ENCODE measurements at regions of chr1 and their contacts with region 1.

Region 1: GRCh38 chr1:178542560-178543356 is 29.8 kb downstream of the TEX35 start:
- DNase-seq: peak; percentile 93
- ATAC-seq: peak; percentile 80
- H3K4me3 ChIP-seq: peak overlapping the region; percentile 84 to 90 (median 88)
- H3K4me3 Mint-ChIP-seq: peak overlapping the region; percentile 99
- H3K27ac ChIP-seq: peak overlapping the region; percentile 55 to 61
- H3K27ac Mint-ChIP-seq: peak overlapping the region; percentile 98
- H3K4me1 ChIP-seq: peaks cover 36 to 46% of the 10 kb centered on the region in 2 donors
- H3K4me1 Mint-ChIP-seq: peaks cover 50% of the 10 kb centered on the region
- H3K27me3 ChIP-seq: no peaks in the 10 kb centered on the region
- H3K27me3 Mint-ChIP-seq: no peaks in the 10 kb centered on the region
- CTCF ChIP-seq: peak; percentile 99

Region 2: GRCh38 chr1:177659281-177659680 is 883.5 kb before region 1 on chr1:
- CTCF ChIA-PET with region 1: no interaction called
- POLR2A ChIA-PET with region 1: no interaction called
- intact Hi-C with region 1: no loop called
- DNase-seq: no peak
- ATAC-seq: no peak
- H3K4me3 ChIP-seq: no peak overlapping the region
- H3K4me3 Mint-ChIP-seq: no peak overlapping the region
- H3K27ac ChIP-seq: no peak overlapping the region
- H3K27ac Mint-ChIP-seq: no peak overlapping the region
- H3K4me1 ChIP-seq: no peaks in the 10 kb centered on the region
- H3K4me1 Mint-ChIP-seq: no peaks in the 10 kb centered on the region
- H3K27me3 ChIP-seq: no peaks in the 10 kb centered on the region
- H3K27me3 Mint-ChIP-seq: no peaks in the 10 kb centered on the region
- CTCF ChIP-seq: no peak

Region 3: DNA sequence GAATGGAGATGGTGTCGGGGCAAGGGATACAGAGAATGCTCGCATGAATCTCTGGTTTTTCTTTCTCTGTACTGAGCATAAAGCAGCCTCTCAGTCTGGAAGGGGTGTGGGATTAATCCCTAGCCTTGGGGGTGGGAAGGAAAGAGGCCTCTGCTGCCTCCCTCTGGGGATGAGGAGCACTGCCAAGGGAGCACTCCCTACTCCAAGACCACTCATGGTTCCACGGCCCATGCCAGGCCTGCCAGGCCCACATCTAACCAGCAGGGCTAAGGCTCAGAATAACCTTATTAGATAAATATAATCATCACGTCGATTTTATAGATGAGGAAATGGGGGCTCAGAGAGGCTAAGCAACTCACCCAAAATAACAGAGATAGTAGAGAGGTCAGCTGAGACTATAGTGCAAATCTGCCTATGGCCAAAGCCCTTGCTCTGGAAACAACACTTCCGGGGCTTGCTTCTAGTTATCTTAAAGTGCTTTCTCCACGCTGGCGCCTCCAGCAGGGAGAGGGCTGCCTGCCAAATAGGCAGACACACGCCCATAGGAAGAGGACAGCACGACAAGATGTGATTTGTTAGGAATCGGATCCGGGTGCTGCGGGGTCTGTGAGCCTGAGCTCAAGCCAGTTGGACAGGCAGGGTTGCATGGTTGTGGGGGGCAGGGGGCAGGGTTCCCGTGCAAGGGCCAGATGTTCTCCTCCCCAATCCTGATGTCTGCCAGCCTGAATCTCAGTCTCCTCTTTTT is 29.3 kb before region 1 on chr1:
- CTCF ChIA-PET with region 1: no interaction called
- POLR2A ChIA-PET with region 1: no interaction called
- intact Hi-C with region 1: no loop called
- DNase-seq: no peak
- ATAC-seq: no peak
- H3K4me3 ChIP-seq: no peak overlapping the region
- H3K4me3 Mint-ChIP-seq: no peak overlapping the region
- H3K27ac ChIP-seq: no peak overlapping the region
- H3K27ac Mint-ChIP-seq: no peak overlapping the region
- H3K4me1 ChIP-seq: no peaks in the 10 kb centered on the region
- H3K4me1 Mint-ChIP-seq: no peaks in the 10 kb centered on the region
- H3K27me3 ChIP-seq: no peaks in the 10 kb centered on the region
- H3K27me3 Mint-ChIP-seq: no peaks in the 10 kb centered on the region
- CTCF ChIP-seq: no peak

Region 4: GRCh38 chr1:178566187-178566586 is 23.4 kb after region 1 on chr1:
- CTCF ChIA-PET with region 1: interaction called, 7 read pairs
- POLR2A ChIA-PET with region 1: no interaction called
- intact Hi-C with region 1: loop called (anchors 2 kb)
- DNase-seq: no peak
- ATAC-seq: no peak
- H3K4me3 ChIP-seq: no peak overlapping the region
- H3K4me3 Mint-ChIP-seq: no peak overlapping the region
- H3K27ac ChIP-seq: peak overlapping the region in 1 of 2 donors; percentile 44
- H3K27ac Mint-ChIP-seq: peak overlapping the region; percentile 81
- H3K4me1 ChIP-seq: peaks cover 29 to 51% of the 10 kb centered on the region in 2 donors
- H3K4me1 Mint-ChIP-seq: peaks cover 71% of the 10 kb centered on the region
- H3K27me3 ChIP-seq: no peaks in the 10 kb centered on the region
- H3K27me3 Mint-ChIP-seq: no peaks in the 10 kb centered on the region
- CTCF ChIP-seq: no peak

Region 5: GRCh38 chr1:178607718-178608408 is 65.1 kb after region 1 on chr1:
- CTCF ChIA-PET with region 1: interaction called, 44 read pairs
- POLR2A ChIA-PET with region 1: interaction called, 12 read pairs
- intact Hi-C with region 1: loop called (anchors 1 kb)
- DNase-seq: peak; percentile 69
- ATAC-seq: peak; percentile 11
- H3K4me3 ChIP-seq: peak overlapping the region in 1 of 5 experiments; percentile 39
- H3K4me3 Mint-ChIP-seq: peak overlapping the region; percentile 69
- H3K27ac ChIP-seq: peak overlapping the region; percentile 96 to 98
- H3K27ac Mint-ChIP-seq: peak overlapping the region; percentile 99
- H3K4me1 ChIP-seq: peaks cover 83 to 88% of the 10 kb centered on the region in 2 donors
- H3K4me1 Mint-ChIP-seq: peaks cover 78% of the 10 kb centered on the region
- H3K27me3 ChIP-seq: no peaks in the 10 kb centered on the region
- H3K27me3 Mint-ChIP-seq: no peaks in the 10 kb centered on the region
- CTCF ChIP-seq: no peak

Region 6: DNA sequence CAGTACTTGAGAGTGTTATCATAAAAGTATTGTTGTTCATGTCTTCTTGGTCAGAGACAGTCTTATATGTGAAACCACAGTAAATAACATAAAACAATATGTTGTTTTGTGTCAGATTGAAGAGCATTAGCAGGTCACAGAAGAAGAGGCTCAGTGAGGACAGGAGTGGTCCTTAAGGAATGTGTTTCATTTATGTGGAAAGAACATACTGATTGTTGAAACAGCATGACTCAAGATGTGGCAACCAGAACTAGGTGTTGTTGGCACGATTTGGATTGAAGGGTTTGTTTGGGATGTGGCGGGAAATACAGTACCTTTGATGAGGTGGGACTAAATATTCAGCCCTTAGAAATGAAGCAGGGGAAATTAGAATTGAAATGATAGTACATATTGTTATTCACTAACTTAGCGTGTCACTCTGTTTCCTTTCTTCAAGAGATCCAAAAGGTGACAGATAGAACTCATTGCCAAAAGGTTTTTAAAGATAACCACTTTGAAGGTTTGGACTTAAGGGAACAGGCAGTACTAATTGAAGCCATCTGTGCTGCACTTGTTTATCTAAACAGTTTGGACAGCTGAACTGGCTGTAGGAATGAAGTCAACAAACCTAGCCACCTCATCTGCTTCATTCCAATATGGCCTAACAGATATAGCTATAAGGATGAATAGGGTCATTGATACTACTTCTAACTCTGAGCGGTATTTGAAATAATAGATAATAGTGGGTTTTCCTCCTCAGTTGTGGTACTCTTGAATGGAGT is 196.7 kb after region 1 on chr1:
- CTCF ChIA-PET with region 1: interaction called, 14 read pairs
- POLR2A ChIA-PET with region 1: interaction called, 9 read pairs
- intact Hi-C with region 1: no loop called
- DNase-seq: no peak
- ATAC-seq: no peak
- H3K4me3 ChIP-seq: no peak overlapping the region
- H3K4me3 Mint-ChIP-seq: peak overlapping the region; percentile 2
- H3K27ac ChIP-seq: peak overlapping the region in 1 of 2 donors; percentile 70
- H3K27ac Mint-ChIP-seq: peak overlapping the region; percentile 75
- H3K4me1 ChIP-seq: peaks cover 32 to 41% of the 10 kb centered on the region in 2 donors
- H3K4me1 Mint-ChIP-seq: peaks cover 65% of the 10 kb centered on the region
- H3K27me3 ChIP-seq: no peaks in the 10 kb centered on the region
- H3K27me3 Mint-ChIP-seq: no peaks in the 10 kb centered on the region
- CTCF ChIP-seq: no peak

Region 7: GRCh38 chr1:178789201-178789600 is 246.4 kb after region 1 on chr1:
- CTCF ChIA-PET with region 1: interaction called, 42 read pairs
- POLR2A ChIA-PET with region 1: interaction called, 4 read pairs
- intact Hi-C with region 1: no loop called
- DNase-seq: no peak
- ATAC-seq: no peak
- H3K4me3 ChIP-seq: no peak overlapping the region
- H3K4me3 Mint-ChIP-seq: no peak overlapping the region
- H3K27ac ChIP-seq: peak overlapping the region in 1 of 2 donors; percentile 34
- H3K27ac Mint-ChIP-seq: peak overlapping the region; percentile 74
- H3K4me1 ChIP-seq: peaks cover 6 to 15% of the 10 kb centered on the region in 2 donors
- H3K4me1 Mint-ChIP-seq: peaks cover 45% of the 10 kb centered on the region
- H3K27me3 ChIP-seq: no peaks in the 10 kb centered on the region
- H3K27me3 Mint-ChIP-seq: no peaks in the 10 kb centered on the region
- CTCF ChIP-seq: no peak

Region 8: GRCh38 chr1:179002552-179003345 is 460.0 kb after region 1 on chr1:
- CTCF ChIA-PET with region 1: interaction called, 594 read pairs
- POLR2A ChIA-PET with region 1: interaction called, 3 read pairs
- intact Hi-C with region 1: no loop called
- DNase-seq: peak; percentile 82
- ATAC-seq: peak; percentile 96
- H3K4me3 ChIP-seq: no peak overlapping the region
- H3K4me3 Mint-ChIP-seq: no peak overlapping the region
- H3K27ac ChIP-seq: no peak overlapping the region
- H3K27ac Mint-ChIP-seq: peak overlapping the region; percentile 10
- H3K4me1 ChIP-seq: peaks cover 7 to 22% of the 10 kb centered on the region in 2 donors
- H3K4me1 Mint-ChIP-seq: peaks cover 14% of the 10 kb centered on the region
- H3K27me3 ChIP-seq: no peaks in the 10 kb centered on the region
- H3K27me3 Mint-ChIP-seq: no peaks in the 10 kb centered on the region
- CTCF ChIP-seq: peak; percentile 97

Measured in B cell (primary cell).